SK-N-SH (cell line): ENCODE measurements at regions of chr7 and their contacts with region 1.

Region 1: DNA sequence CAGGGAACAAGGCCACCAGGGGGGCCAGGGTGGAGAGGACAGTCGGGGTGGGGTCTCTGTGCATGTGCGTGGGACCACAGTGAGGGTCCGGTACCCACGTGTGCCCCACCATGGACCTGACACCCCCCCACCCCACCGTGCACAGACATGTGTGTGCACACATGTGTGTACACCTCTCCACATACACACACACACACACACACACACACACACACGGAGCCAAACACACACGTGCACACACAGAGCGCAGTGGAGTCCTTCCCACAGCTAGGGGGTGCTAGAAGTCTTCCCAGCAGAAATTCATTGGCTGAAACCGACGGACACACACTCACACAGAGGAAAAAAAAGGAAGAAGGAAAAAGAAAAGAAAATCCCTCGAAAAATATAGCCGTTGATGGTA is 42.8 kb upstream of the GNA12 start:
- DNase-seq: peak; percentile 91
- H3K4me3 ChIP-seq: peak overlapping the region in 1 of 2 experiments; percentile 33; a peak in 1 of 4 replicates
- H3K27ac ChIP-seq: no peak overlapping the region
- H3K4me1 ChIP-seq: peaks cover 0 to 2% of the 10 kb centered on the region in 2 experiments; a peak in 1 of 4 replicates
- H3K27me3 ChIP-seq: no peaks in the 10 kb centered on the region
- CTCF ChIP-seq: peak; percentile 92
- EP300 ChIP-seq: no peak
- RAD21 ChIP-seq: peak; percentile 99

Region 2: GRCh38 chr7:2851497-2851896 is 35.4 kb before region 1 on chr7:
- CTCF ChIA-PET with region 1: no interaction called
- POLR2A ChIA-PET with region 1: no interaction called
- DNase-seq: no peak
- H3K4me3 ChIP-seq: no peak overlapping the region
- H3K27ac ChIP-seq: no peak overlapping the region
- H3K4me1 ChIP-seq: no peaks in the 10 kb centered on the region
- H3K27me3 ChIP-seq: no peaks in the 10 kb centered on the region
- CTCF ChIP-seq: no peak
- EP300 ChIP-seq: no peak
- RAD21 ChIP-seq: no peak

Region 3: DNA sequence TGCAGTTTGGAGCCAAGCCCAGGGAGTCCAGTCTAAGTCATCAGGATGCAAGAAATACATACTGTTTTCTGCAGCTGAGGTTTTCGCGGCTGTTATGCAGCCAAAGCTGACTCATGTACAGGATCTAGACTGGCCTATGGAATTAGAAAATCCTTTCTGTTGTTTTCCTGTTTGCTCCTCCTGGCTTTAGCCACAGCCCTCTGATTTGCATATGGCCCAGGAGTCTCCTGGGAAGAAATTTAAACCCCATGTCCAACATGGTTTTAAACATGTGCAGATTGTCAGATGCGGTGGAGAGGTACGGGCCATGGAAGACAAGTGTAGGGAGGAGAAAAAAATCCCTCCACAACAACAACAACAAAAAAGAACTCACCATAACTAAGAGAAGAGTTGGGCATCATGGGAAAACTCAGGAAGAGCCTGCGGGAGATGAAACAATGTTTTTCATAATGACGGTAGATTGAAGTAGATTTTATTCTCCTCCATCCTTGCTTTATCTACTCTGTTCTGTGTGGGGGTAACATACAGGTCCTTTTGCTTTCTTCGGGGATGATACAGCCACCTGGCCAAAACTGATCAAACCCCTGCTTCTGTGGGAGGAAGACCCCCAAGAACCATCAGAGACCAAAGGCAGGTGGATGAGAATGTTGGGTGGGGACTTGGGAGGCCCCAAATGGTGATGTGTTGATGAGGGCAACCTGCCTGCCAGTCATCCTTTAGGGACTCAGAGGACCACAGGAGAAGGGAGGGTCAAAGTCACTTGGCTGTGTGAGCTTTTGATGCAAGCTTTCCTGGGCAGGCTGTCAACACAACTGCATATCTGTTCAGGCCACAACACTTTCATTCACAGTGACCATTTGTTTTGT is 13.0 kb before region 1 on chr7:
- CTCF ChIA-PET with region 1: interaction called, 26 read pairs
- POLR2A ChIA-PET with region 1: no interaction called
- DNase-seq: peak; percentile 43
- H3K4me3 ChIP-seq: no peak overlapping the region
- H3K27ac ChIP-seq: peak overlapping the region in 1 of 2 experiments; percentile 81; a peak in 2 of 4 replicates
- H3K4me1 ChIP-seq: peaks cover 0 to 11% of the 10 kb centered on the region in 2 experiments; a peak in 1 of 4 replicates
- H3K27me3 ChIP-seq: no peaks in the 10 kb centered on the region
- CTCF ChIP-seq: no peak
- EP300 ChIP-seq: no peak
- RAD21 ChIP-seq: no peak

Region 4: DNA sequence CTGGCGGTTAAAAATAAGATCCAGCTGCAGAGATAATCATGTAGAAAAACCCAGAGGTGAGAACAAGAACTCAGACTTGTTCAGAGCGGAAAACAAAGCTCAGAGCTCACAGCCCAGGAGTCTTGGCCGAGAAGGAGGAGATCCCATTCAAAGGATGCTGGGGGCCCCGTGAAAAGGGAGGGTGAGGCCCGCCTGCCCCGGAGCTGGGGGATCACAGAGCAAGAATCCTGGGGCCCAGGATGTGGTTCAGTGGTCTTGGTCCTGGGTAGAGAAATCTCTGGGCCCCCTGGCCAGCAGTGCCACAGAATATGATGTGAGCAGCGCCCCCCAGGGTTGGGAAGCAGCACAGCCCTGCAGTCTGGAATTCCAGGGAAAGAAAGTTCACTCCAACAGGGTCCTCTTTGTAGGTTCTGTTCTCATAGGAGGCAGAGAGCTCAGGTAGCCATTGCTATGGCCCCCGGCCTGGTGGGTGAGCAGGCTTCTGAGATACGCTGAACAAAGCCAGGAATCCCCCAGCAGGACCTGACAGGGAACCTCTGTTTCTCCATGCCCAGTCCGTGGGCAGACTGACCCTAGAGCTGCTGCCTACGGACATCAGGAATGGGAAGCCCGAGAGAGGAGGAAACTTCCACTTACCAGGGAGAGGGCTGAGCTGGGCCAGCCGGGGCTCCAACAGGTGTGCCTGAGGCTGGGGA is 34.9 kb after region 1 on chr7:
- CTCF ChIA-PET with region 1: interaction called, 27 read pairs
- POLR2A ChIA-PET with region 1: no interaction called
- DNase-seq: peak; percentile 82
- H3K4me3 ChIP-seq: peak overlapping the region in 1 of 2 experiments; percentile 33; a peak in 1 of 4 replicates
- H3K27ac ChIP-seq: 0 out of 4 replicates have a peak overlapping the region, but pooled peaks of 1 of the 2 experiments have one; percentile 7
- H3K4me1 ChIP-seq: peaks cover 0 to 13% of the 10 kb centered on the region in 2 experiments; a peak in 1 of 4 replicates
- H3K27me3 ChIP-seq: peaks cover 9% of the 10 kb centered on the region; the same call in 1 of the 2 replicates
- CTCF ChIP-seq: peak; percentile 56
- EP300 ChIP-seq: no peak
- RAD21 ChIP-seq: peak; percentile 30; the same call in 1 of the 2 replicates

Region 5: GRCh38 chr7:3146571-3147226 is 259.8 kb after region 1 on chr7:
- CTCF ChIA-PET with region 1: interaction called, 18 read pairs
- POLR2A ChIA-PET with region 1: no interaction called
- DNase-seq: no peak
- H3K4me3 ChIP-seq: no peak overlapping the region
- H3K27ac ChIP-seq: no peak overlapping the region
- H3K4me1 ChIP-seq: no peaks in the 10 kb centered on the region
- H3K27me3 ChIP-seq: no peaks in the 10 kb centered on the region
- CTCF ChIP-seq: no peak
- EP300 ChIP-seq: no peak
- RAD21 ChIP-seq: no peak

Region 6: DNA sequence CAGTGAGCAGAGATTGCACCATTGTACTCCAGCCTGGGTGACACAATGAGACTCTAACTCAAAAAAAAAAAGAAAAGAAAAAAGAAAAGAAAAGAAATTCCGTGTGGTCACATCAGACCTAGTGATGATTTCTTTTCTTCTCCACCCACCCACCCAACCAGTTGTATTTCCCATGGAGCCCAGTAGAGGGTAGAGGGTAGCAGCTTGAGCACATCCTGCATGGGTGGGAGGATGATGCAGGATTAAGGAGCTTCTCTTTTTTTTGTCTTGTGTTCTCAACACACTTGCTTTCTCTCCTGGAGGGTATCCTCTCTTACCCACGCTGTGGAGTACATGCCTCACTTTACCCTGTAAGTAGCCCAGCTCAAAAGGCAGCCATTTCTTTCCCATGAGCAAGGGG is 275.4 kb after region 1 on chr7:
- CTCF ChIA-PET with region 1: interaction called, 20 read pairs
- POLR2A ChIA-PET with region 1: no interaction called
- DNase-seq: peak; percentile 57
- H3K4me3 ChIP-seq: no peak overlapping the region
- H3K27ac ChIP-seq: no peak overlapping the region
- H3K4me1 ChIP-seq: peaks cover 0 to 3% of the 10 kb centered on the region in 2 experiments; a peak in 1 of 4 replicates
- H3K27me3 ChIP-seq: no peaks in the 10 kb centered on the region
- CTCF ChIP-seq: no peak
- EP300 ChIP-seq: no peak
- RAD21 ChIP-seq: peak; percentile 60